ENCODE measurements at regions of chr17 and their contacts with region 1.

Region 1: GRCh38 chr17:75904749-75905521 is at the start of gene MRPL38:
- DNase-seq: peak; percentile 88 to 98
- H3K4me3 ChIP-seq: peak within 1 kb of the TSS; percentile 60
- CTCF ChIP-seq: peak in 2 of 3 donors; percentile 8 to 98
- POLR2A ChIP-seq: no peak
- total RNA-seq, gene MRPL38: 36.5 to 64.7 (median 49.0) TPM

Region 2: GRCh38 chr17:76005263-76006149 is 100.6 kb after region 1 on chr17:
- intact Hi-C with region 1: loop called (anchors 5 kb)
- DNase-seq: peak; percentile 74 to 95
- H3K4me3 ChIP-seq: no peak overlapping the region
- CTCF ChIP-seq: peak in 1 of 3 donors; percentile 42
- POLR2A ChIP-seq: no peak

Region 3: GRCh38 chr17:76088036-76088867 is 183.3 kb after region 1 on chr17:
- intact Hi-C with region 1: no loop called
- DNase-seq: no peak
- H3K4me3 ChIP-seq: no peak overlapping the region
- CTCF ChIP-seq: no peak
- POLR2A ChIP-seq: no peak

Measured in lower leg skin (tissue), 4 donors.